ENCODE measurements at regions of chr19 and their contacts with region 1.

Region 1: GRCh38 chr19:7562646-7563393 is 27.3 kb downstream of the PNPLA6 start:
- DNase-seq: no peak
- ATAC-seq: no peak
- H3K4me3 ChIP-seq: no peak overlapping the region
- H3K27ac ChIP-seq: no peak overlapping the region
- H3K4me1 ChIP-seq: no peaks in the 10 kb centered on the region
- H3K27me3 ChIP-seq: no peaks in the 10 kb centered on the region
- CTCF ChIP-seq: no peak
- EP300 ChIP-seq: no peak
- POLR2A ChIP-seq: no peak
- RAD21 ChIP-seq: no peak

Region 2: GRCh38 chr19:7366701-7367420 is 196.0 kb before region 1 on chr19:
- CTCF ChIA-PET with region 1: interaction called, 12 read pairs
- POLR2A ChIA-PET with region 1: no interaction called
- RAD21 ChIA-PET with region 1: interaction called, 12 read pairs
- SMC1A ChIA-PET with region 1: interaction called, 8 read pairs
- in situ Hi-C with region 1: no loop called
- intact Hi-C with region 1: no loop called
- DNase-seq: no peak
- ATAC-seq: peak; percentile 90
- H3K4me3 ChIP-seq: no peak overlapping the region
- H3K27ac ChIP-seq: no peak overlapping the region
- H3K4me1 ChIP-seq: no peaks in the 10 kb centered on the region
- H3K27me3 ChIP-seq: no peaks in the 10 kb centered on the region
- CTCF ChIP-seq: peak; percentile 65 to 69 (median 66)
- EP300 ChIP-seq: no peak
- POLR2A ChIP-seq: no peak
- RAD21 ChIP-seq: peak; percentile 72

Region 3: DNA sequence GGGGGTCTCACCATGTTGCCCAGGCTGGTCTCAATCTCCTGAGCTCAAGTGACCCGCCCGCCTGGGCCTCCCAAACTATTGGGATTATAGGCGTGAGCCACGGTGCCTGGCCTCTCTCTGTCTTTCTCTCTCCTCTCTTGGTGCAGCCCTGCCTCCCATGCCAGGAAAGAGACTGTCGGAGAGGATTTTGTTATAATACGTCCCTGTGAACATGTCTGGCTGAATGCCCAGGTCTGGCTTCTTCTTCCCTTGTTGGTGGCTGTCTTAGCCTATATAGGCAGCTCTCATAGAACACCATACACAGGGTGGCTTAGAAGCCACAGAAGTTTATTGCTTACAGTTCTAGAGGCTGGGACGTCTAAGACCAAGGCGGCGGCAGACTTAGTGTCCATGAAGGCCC is 120.4 kb before region 1 on chr19:
- CTCF ChIA-PET with region 1: no interaction called
- POLR2A ChIA-PET with region 1: no interaction called
- RAD21 ChIA-PET with region 1: no interaction called
- SMC1A ChIA-PET with region 1: no interaction called
- in situ Hi-C with region 1: no loop called
- intact Hi-C with region 1: no loop called
- DNase-seq: no peak
- ATAC-seq: no peak
- H3K4me3 ChIP-seq: no peak overlapping the region
- H3K27ac ChIP-seq: no peak overlapping the region
- H3K4me1 ChIP-seq: no peaks in the 10 kb centered on the region
- H3K27me3 ChIP-seq: no peaks in the 10 kb centered on the region
- CTCF ChIP-seq: no peak
- EP300 ChIP-seq: no peak
- POLR2A ChIP-seq: no peak
- RAD21 ChIP-seq: no peak

Region 4: DNA sequence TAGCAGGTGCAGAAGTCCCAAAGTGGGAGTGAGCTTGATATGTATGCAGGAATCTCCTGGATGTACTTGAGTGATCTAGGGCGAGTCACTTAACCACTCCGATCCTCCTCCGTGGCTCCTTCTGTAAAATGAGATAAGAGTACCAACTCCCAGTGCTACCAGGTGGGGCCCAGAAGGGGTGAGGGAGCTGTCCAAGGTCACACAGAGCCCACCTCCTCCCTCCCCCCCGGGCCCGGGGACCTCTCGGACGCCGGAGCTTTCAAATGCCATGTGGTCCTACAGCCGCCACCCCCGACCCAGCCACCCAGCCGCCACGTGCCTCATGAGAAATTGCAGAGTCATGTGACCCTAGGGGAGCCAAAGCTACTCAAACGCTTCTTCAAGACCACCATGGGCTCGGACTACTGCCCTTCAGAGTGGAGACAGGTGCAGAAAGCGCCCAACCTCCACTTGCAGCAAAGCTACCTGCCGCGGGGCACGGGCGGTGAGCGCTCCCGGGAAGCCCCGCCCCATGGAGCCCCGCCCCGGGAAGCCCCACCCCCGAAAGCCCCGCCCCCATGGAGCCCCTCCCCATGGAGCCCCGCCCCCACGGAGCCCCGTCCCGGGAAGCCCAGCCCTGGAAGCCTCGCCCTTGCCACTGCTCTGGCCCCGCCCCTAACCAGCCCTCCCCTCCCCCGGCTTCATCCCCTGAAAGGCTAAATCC is 57.0 kb before region 1 on chr19:
- CTCF ChIA-PET with region 1: no interaction called
- POLR2A ChIA-PET with region 1: no interaction called
- RAD21 ChIA-PET with region 1: no interaction called
- SMC1A ChIA-PET with region 1: no interaction called
- in situ Hi-C with region 1: no loop called
- intact Hi-C with region 1: no loop called
- DNase-seq: no peak
- ATAC-seq: peak; percentile 50
- H3K4me3 ChIP-seq: no peak overlapping the region
- H3K27ac ChIP-seq: no peak overlapping the region
- H3K4me1 ChIP-seq: no peaks in the 10 kb centered on the region
- H3K27me3 ChIP-seq: no peaks in the 10 kb centered on the region
- CTCF ChIP-seq: no peak
- EP300 ChIP-seq: no peak
- POLR2A ChIP-seq: no peak
- RAD21 ChIP-seq: no peak

Region 5: GRCh38 chr19:7595466-7596133 is 32.8 kb after region 1 on chr19 and contains the start of gene CAMSAP3:
- CTCF ChIA-PET with region 1: interaction called, 30 read pairs
- POLR2A ChIA-PET with region 1: no interaction called
- RAD21 ChIA-PET with region 1: interaction called, 16 read pairs
- SMC1A ChIA-PET with region 1: interaction called, 7 read pairs
- in situ Hi-C with region 1: no loop called
- intact Hi-C with region 1: no loop called
- DNase-seq: no peak
- ATAC-seq: peak; percentile 66
- H3K4me3 ChIP-seq: peak within 1 kb of the TSS; percentile 77
- H3K27ac ChIP-seq: no peak within 1 kb of the TSS
- H3K4me1 ChIP-seq: no peaks in the 10 kb centered on the region; the same call in 1 of the 2 replicates
- H3K27me3 ChIP-seq: peaks cover 0 to 2% of the 10 kb centered on the region in 2 experiments; a peak in 1 of 4 replicates
- CTCF ChIP-seq: no peak
- EP300 ChIP-seq: no peak
- POLR2A ChIP-seq: no peak
- RAD21 ChIP-seq: no peak
- polyA plus RNA-seq, gene CAMSAP3: 0.03 to 0.22 TPM

Region 6: DNA sequence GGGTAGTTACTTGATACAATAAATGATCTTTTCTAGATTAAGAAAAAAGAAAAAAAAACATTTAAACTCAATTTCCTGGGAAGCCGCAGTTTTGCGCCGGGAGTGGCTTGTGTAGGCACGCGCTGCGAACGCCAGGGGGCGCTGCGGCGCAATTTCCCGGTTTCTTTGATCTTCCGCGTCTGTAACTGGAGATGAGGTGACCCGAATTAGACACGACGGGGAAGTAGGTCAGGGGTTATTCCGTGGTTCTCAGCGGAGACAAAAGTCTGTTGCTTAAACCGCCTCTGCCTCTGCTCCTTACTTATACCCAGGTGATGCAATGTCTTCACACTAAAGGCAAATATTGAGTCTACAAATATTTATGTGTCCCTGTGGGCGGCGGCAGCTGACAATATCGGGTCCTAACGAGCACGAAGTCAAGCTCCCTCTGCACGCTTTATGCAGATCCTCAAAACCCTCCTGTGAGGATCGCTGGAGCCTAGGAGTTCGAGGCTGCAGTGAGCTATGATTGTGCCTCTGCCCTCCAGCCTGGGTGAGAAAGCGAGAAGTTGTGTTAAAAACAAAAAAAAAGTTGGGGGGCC is 89.3 kb after region 1 on chr19:
- CTCF ChIA-PET with region 1: interaction called, 13 read pairs
- POLR2A ChIA-PET with region 1: no interaction called
- RAD21 ChIA-PET with region 1: interaction called, 6 read pairs
- SMC1A ChIA-PET with region 1: interaction called, 5 read pairs
- in situ Hi-C with region 1: no loop called
- intact Hi-C with region 1: no loop called
- DNase-seq: peak; percentile 48
- ATAC-seq: peak; percentile 87
- H3K4me3 ChIP-seq: no peak overlapping the region
- H3K27ac ChIP-seq: no peak overlapping the region
- H3K4me1 ChIP-seq: peaks cover 7% of the 10 kb centered on the region
- H3K27me3 ChIP-seq: no peaks in the 10 kb centered on the region; a peak in 1 of 4 replicates
- CTCF ChIP-seq: peak; percentile 91 to 97 (median 95)
- EP300 ChIP-seq: no peak
- POLR2A ChIP-seq: no peak
- RAD21 ChIP-seq: peak; percentile 60

Region 7: DNA sequence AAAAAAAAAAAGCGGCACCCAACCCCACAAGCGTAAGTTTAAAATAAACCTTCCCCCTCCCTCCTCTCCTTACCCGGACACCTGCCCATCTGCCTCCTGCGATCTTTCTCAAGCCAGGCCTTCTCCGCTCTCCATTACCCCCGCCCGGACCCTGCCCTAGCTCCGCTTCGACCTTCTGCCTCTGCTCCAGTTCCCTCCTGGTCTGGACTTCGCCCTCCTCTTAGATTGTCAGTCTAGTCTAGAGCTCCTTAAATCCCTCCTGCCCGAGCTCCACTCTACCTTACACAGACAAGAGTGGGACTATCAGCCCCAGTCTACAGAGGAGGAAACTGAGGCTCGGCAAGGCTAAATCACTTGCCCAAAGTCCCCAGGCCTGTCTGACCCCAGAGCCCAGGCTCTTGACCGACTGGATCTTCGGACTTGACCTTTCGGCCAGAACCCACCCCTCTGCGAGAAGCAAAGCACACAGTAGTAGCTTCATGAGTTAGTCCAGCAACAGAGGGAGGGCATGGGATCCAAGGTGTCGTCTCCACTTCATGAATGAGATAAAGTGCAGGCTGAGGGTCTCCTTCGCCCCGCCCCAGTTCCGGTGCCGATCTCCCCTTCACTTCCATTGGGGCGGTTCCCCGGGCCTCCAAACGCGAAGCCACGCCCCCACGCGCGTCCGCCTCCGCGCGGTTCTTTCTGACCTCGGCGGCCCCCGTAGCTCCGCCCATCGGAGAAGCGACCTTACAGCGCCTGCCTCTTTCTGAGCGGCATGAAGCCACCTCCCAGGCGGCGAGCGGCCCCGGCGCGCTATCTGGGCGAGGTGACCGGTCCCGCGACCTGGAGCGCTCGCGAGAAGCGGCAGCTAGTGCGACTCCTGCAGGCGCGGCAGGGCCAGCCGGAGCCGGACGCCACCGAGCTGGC is 357.0 kb after region 1 on chr19 and contains the start of gene SNAPC2:
- CTCF ChIA-PET with region 1: interaction called, 8 read pairs
- POLR2A ChIA-PET with region 1: no interaction called
- RAD21 ChIA-PET with region 1: interaction called, 10 read pairs
- SMC1A ChIA-PET with region 1: no interaction called
- in situ Hi-C with region 1: no loop called
- intact Hi-C with region 1: no loop called
- DNase-seq: peak; percentile 70
- ATAC-seq: peak; percentile 86
- H3K4me3 ChIP-seq: peak within 1 kb of the TSS; percentile 82
- H3K27ac ChIP-seq: peak within 1 kb of the TSS; percentile 44
- H3K4me1 ChIP-seq: peaks cover 11% of the 10 kb centered on the region
- H3K27me3 ChIP-seq: peaks cover 8 to 21% of the 10 kb centered on the region in 2 experiments
- CTCF ChIP-seq: no peak
- EP300 ChIP-seq: no peak
- POLR2A ChIP-seq: peak; percentile 61; the same call in 1 of the 2 replicates
- RAD21 ChIP-seq: no peak
- polyA plus RNA-seq, gene SNAPC2: 0.19 to 1.0 TPM

Measured in GM12878 (cell line).